Colonic mucosa (tissue), 4 donors: ENCODE measurements at regions of chr12 and their contacts with region 1.

Region 1: DNA sequence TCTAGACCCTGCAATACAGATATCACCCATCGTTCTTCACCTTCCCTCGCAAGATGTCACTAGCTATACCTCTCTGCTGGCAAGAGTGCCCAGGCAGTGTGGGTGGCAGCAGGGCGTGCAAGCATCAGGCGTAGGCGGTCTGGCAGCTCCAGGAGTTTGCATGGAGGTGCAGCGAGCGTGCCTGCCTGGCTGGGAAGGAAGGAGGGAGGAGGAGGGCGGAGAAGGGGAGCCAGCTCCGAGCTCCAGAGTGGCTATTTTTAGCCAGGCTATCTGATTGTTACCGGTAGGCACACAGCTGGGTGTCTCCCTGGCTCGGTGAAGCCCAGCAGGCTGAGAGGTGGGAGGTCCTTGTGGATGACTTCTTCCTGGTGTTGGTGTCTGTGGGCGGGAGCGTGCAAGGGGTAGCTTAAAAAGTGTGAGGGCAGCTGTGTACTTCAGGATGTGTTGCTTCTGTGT is 6.2 kb downstream of the FOXJ2 start:
- DNase-seq: peak; percentile 52
- H3K4me3 ChIP-seq: peak overlapping the region; percentile 13
- H3K27ac ChIP-seq: peak overlapping the region; percentile 28
- H3K4me1 ChIP-seq: peaks cover 35% of the 10 kb centered on the region
- H3K27me3 ChIP-seq: no peaks in the 10 kb centered on the region
- CTCF ChIP-seq: no peak

Region 2: GRCh38 chr12:8081251-8081920 is 42.7 kb after region 1 on chr12:
- intact Hi-C with region 1: loop called (anchors 5 kb)
- DNase-seq: peak; percentile 41
- H3K4me3 ChIP-seq: peak overlapping the region; percentile 60
- H3K27ac ChIP-seq: peak overlapping the region; percentile 96
- H3K4me1 ChIP-seq: peaks cover 6% of the 10 kb centered on the region
- H3K27me3 ChIP-seq: no peaks in the 10 kb centered on the region
- CTCF ChIP-seq: no peak